Gastrocnemius medialis (tissue), 4 donors: ENCODE measurements at regions of chr3 and their contacts with region 1.

Region 1: GRCh38 chr3:69120879-69121464 is 1.4 kb downstream of the LMOD3 start:
- DNase-seq: peak; percentile 73 to 92
- ATAC-seq: peak; percentile 43 to 49
- H3K4me3 ChIP-seq: peak overlapping the region; percentile 25 to 54 (median 48)
- H3K27ac ChIP-seq: peak overlapping the region; percentile 95 to 97 (median 96)
- H3K4me1 ChIP-seq: peaks cover 13 to 52% of the 10 kb centered on the region in 2 donors
- H3K27me3 ChIP-seq: no peaks in the 10 kb centered on the region
- CTCF ChIP-seq: peak; percentile 91 to 93 (median 92)
- POLR2A ChIP-seq: no peak

Region 2: GRCh38 chr3:68861521-68862296 is 259.3 kb before region 1 on chr3:
- in situ Hi-C with region 1: no loop called
- intact Hi-C with region 1: no loop called
- DNase-seq: no peak
- ATAC-seq: no peak
- H3K4me3 ChIP-seq: no peak overlapping the region
- H3K27ac ChIP-seq: no peak overlapping the region
- H3K4me1 ChIP-seq: no peaks in the 10 kb centered on the region
- H3K27me3 ChIP-seq: no peaks in the 10 kb centered on the region
- CTCF ChIP-seq: no peak
- POLR2A ChIP-seq: no peak

Region 3: GRCh38 chr3:69143605-69144004 is 22.6 kb after region 1 on chr3:
- in situ Hi-C with region 1: no loop called
- intact Hi-C with region 1: loop called (anchors 2 kb)
- DNase-seq: no peak
- ATAC-seq: peak; percentile 84 to 89
- H3K4me3 ChIP-seq: no peak overlapping the region
- H3K27ac ChIP-seq: peak overlapping the region; percentile 72 to 81 (median 76)
- H3K4me1 ChIP-seq: peaks cover 36% of the 10 kb centered on the region in 2 donors
- H3K27me3 ChIP-seq: no peaks in the 10 kb centered on the region
- CTCF ChIP-seq: no peak
- POLR2A ChIP-seq: no peak

Region 4: GRCh38 chr3:69306239-69307185 is 185.5 kb after region 1 on chr3:
- in situ Hi-C with region 1: no loop called
- intact Hi-C with region 1: loop called (anchors 1 kb)
- DNase-seq: peak; percentile 66 to 75
- ATAC-seq: peak; percentile 98
- H3K4me3 ChIP-seq: no peak overlapping the region
- H3K27ac ChIP-seq: peak overlapping the region; percentile 49 to 65 (median 55)
- H3K4me1 ChIP-seq: peaks cover 0 to 3% of the 10 kb centered on the region in 2 donors
- H3K27me3 ChIP-seq: no peaks in the 10 kb centered on the region
- CTCF ChIP-seq: peak; percentile 84 to 94 (median 89)
- POLR2A ChIP-seq: no peak

Region 5: GRCh38 chr3:69784954-69785514 is 664.1 kb after region 1 on chr3:
- in situ Hi-C with region 1: no loop called
- intact Hi-C with region 1: loop called (anchors 10 kb)
- DNase-seq: peak; percentile 76 to 84
- ATAC-seq: peak; percentile 94 to 97
- H3K4me3 ChIP-seq: no peak overlapping the region
- H3K27ac ChIP-seq: peak overlapping the region; percentile 72 to 81 (median 72)
- H3K4me1 ChIP-seq: peaks cover 65 to 75% of the 10 kb centered on the region in 2 donors
- H3K27me3 ChIP-seq: no peaks in the 10 kb centered on the region
- CTCF ChIP-seq: no peak
- POLR2A ChIP-seq: no peak

Region 6: GRCh38 chr3:71064288-71064955 is 1943.5 kb after region 1 on chr3:
- in situ Hi-C with region 1: no loop called
- intact Hi-C with region 1: loop called (anchors 10 kb)
- DNase-seq: peak in 1 of 2 donors; percentile 9
- ATAC-seq: peak; percentile 20 to 28
- H3K4me3 ChIP-seq: peak overlapping the region; percentile 58 to 83 (median 72)
- H3K27ac ChIP-seq: peak overlapping the region; percentile 86 to 91 (median 89)
- H3K4me1 ChIP-seq: peaks cover 49 to 52% of the 10 kb centered on the region in 2 donors
- H3K27me3 ChIP-seq: no peaks in the 10 kb centered on the region
- CTCF ChIP-seq: peak in 3 of 5 experiments; percentile 8 to 20 (median 18)
- POLR2A ChIP-seq: peak; percentile 45 to 64